Cardiac septum (tissue), 1 donor: ENCODE measurements at regions of chr16 and their contacts with region 1.

Region 1: GRCh38 chr16:2251483-2252240 is at the start of gene ECI1:
- DNase-seq: peak; percentile 99
- total RNA-seq, gene ECI1: 139 TPM

Region 2: GRCh38 chr16:2155091-2156021 is 96.3 kb before region 1 on chr16 and contains the start of gene TRAF7:
- intact Hi-C with region 1: loop called (anchors 5 kb)
- DNase-seq: peak; percentile 99
- total RNA-seq, gene TRAF7: 35.7 TPM

Region 3: GRCh38 chr16:2213817-2214720 is 37.6 kb before region 1 on chr16:
- intact Hi-C with region 1: loop called (anchors 5 kb)
- DNase-seq: no peak

Region 4: DNA sequence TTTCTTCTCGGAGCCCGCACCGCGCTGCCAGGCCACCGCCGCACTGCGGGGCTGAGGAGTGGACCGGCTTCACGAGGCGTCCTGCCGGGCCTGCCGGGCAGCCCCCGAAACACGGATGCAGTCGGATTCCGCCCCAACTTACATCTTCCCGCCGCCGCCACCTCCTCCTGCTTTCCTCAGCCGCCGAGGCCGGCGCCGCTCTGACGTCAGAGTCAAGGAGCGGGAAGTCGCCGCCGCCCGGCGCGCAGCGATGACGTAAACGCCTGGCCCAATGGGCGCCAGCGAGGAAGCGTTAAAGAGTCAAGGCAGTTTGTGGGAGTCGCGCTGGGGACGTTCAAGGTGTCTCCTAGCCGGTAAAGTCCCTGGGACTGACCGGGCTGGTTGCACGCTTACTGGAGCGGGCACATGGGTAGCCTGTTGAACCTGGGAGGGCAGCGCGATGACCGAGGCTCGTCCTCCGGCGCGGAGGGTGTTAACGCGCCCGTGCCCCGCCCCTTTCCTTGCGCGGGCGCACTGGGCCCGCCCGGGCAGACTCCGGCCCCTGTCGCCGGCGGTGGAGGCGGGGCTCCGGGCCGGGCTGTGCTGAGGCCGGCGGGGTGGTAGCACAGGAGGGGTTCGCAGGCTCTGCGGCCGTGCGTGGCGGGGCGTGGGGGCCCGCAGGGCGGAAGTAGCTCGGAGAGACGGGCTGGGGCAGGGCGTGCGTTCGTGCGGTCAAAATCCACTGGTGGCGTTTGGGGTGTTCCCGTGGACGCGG is 16.4 kb after region 1 on chr16 and contains the start of gene RNPS1:
- intact Hi-C with region 1: loop called (anchors 1 kb)
- DNase-seq: peak; percentile 96
- total RNA-seq, gene RNPS1: 106 TPM